ENCODE measurements at regions of chr3 and their contacts with region 1.

Region 1: DNA sequence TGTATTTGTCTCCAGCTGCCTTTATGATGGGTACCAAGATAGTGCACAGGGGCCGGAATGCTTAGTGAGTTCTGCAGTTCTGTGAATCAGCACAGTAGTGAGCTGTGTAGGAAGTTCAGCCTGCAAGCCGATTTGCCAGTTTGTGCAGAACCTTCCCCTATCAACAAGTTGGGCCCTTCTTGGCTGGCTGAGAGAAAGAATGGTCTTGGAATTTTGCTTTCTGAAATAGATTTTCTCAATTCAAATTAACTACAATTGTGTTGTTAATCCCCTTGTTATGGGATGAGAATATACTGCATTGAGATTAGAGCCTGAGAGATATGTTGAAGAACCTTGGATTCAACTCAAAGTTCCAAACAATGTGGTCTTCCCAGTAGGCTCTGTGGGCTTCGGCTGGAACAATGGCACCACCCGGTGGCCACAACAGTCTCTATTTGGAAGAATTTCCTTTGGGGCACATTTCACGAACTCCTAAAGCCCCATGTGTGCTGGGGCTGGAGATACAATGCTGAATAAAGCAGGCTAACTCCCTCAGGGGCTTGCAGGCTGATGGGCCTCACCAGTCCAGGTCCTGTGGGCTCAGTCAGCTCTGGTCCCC is 59.1 kb downstream of the TRIM42 start:
- DNase-seq: peak in 1 of 2 experiments; percentile 65
- H3K4me3 ChIP-seq: no peak overlapping the region
- H3K27ac ChIP-seq: no peak overlapping the region
- H3K4me1 ChIP-seq: no peaks in the 10 kb centered on the region
- H3K27me3 ChIP-seq: no peaks in the 10 kb centered on the region
- CTCF ChIP-seq: peak; percentile 79

Region 2: DNA sequence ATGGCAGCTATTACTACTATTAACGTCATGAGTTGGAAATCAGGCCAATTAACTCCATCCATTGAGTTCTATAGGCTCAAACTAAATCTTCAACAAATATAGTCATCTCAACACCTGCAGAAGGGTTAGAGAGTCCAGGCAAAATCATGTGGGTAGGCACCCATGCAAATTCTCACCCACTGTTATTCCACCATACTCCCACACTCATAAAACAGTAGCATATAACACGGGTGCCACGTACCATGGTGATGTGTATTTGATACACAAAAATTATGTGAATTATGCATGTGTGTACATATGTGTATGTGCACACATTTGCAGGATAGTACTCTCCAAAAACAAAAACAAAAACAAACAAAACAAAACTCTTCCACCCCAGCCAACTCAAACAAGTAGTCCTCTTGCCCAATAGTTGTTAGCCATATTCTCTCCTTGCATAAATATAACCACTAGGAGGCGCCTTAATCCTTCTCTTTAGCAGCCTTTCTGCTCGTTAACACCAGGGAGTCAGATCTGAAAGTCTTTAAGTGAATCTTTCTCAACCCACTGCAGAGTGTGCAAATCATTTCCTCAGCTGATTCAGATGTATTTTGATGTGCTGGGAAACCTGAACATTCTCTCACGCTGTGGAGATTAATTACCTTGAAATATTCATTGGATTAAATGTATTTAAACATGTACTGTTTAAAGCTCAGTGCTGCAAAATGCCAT is 1309.5 kb before region 1 on chr3:
- CTCF ChIA-PET with region 1: no interaction called
- POLR2A ChIA-PET with region 1: no interaction called
- intact Hi-C with region 1: loop called (anchors 10 kb)
- DNase-seq: peak; percentile 12 to 66
- H3K4me3 ChIP-seq: no peak overlapping the region
- H3K27ac ChIP-seq: no peak overlapping the region
- H3K4me1 ChIP-seq: no peaks in the 10 kb centered on the region
- H3K27me3 ChIP-seq: no peaks in the 10 kb centered on the region
- CTCF ChIP-seq: peak; percentile 91

Region 3: DNA sequence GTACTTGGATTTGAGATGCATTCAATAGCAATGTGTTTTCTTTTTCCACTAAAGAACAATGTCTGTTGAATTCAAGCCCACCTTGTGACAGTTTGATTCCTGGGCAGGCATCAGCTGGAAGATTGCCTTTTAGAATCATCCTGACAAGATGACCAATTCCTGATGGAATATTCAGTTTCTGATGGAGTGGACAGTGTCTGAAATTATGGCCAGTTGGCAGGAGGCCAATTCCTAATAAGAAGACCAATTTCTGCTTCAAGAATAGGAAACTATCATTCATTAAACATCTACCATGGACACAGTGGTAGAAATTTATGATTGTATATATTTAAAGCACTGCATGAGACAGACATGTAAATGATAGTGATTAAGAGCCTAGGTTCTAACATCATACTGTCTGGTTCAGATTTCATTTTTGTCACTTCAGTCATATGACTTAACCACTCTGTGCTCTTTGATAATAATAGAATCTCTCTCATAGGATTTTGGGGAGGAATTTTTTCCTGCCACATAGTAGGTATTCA is 668.4 kb before region 1 on chr3:
- CTCF ChIA-PET with region 1: no interaction called
- POLR2A ChIA-PET with region 1: no interaction called
- intact Hi-C with region 1: no loop called
- DNase-seq: no peak
- H3K4me3 ChIP-seq: no peak overlapping the region
- H3K27ac ChIP-seq: no peak overlapping the region
- H3K4me1 ChIP-seq: no peaks in the 10 kb centered on the region
- H3K27me3 ChIP-seq: no peaks in the 10 kb centered on the region
- CTCF ChIP-seq: no peak

Region 4: DNA sequence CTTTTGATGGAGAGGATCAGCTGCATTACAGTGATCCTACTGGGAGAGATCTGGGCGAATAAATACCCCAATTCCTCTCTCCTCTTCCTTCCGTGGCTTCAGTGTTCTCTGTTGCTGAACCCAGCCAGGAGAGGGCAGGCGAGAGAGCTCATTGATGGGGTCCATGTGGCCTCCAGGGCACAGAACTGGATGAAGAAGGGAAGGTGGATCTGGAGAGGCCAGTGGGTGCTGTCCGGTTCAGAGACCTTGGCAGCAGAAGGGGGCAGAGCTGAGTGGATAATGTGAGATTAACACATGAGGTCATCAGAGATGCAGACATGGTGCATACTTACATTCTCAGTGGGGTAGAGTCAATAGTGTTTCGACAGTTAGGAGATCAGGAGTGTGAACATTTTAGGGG is 608.3 kb before region 1 on chr3:
- CTCF ChIA-PET with region 1: no interaction called
- POLR2A ChIA-PET with region 1: no interaction called
- intact Hi-C with region 1: loop called (anchors 1 kb)
- DNase-seq: peak in 1 of 2 experiments; percentile 29
- H3K4me3 ChIP-seq: no peak overlapping the region
- H3K27ac ChIP-seq: no peak overlapping the region
- H3K4me1 ChIP-seq: no peaks in the 10 kb centered on the region
- H3K27me3 ChIP-seq: no peaks in the 10 kb centered on the region
- CTCF ChIP-seq: peak; percentile 69

Region 5: DNA sequence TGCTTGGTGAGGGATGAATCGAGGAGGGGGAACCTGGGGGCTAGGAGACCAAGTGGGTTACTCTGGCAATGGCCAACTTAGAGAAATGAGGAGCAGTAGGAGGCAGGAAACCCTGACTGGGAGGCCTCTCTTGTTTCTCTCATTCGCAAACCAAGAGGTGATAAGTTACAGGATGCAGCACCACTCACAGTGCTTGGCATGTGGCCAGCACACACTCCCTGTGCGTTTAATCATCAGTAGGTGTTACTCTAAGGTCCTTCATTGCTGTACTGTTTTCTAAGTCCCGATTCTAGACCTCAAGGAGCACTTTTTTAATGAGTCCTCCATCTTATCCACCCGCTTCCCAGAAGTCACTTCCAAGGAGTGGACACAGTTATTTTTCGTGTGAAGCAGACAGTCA is 373.2 kb before region 1 on chr3:
- CTCF ChIA-PET with region 1: no interaction called
- POLR2A ChIA-PET with region 1: no interaction called
- intact Hi-C with region 1: loop called (anchors 5 kb)
- DNase-seq: peak in 1 of 2 experiments; percentile 11
- H3K4me3 ChIP-seq: no peak overlapping the region
- H3K27ac ChIP-seq: no peak overlapping the region
- H3K4me1 ChIP-seq: no peaks in the 10 kb centered on the region
- H3K27me3 ChIP-seq: no peaks in the 10 kb centered on the region
- CTCF ChIP-seq: no peak

Region 6: GRCh38 chr3:140559546-140559945 is 177.4 kb before region 1 on chr3:
- CTCF ChIA-PET with region 1: no interaction called
- POLR2A ChIA-PET with region 1: no interaction called
- intact Hi-C with region 1: loop called (anchors 5 kb)
- DNase-seq: no peak
- H3K4me3 ChIP-seq: no peak overlapping the region
- H3K27ac ChIP-seq: no peak overlapping the region
- H3K4me1 ChIP-seq: no peaks in the 10 kb centered on the region
- H3K27me3 ChIP-seq: no peaks in the 10 kb centered on the region
- CTCF ChIP-seq: no peak